ENCODE measurements at regions of chr3 and their contacts with region 1.

Region 1: GRCh38 chr3:126267226-126267975 is 87.0 kb upstream of the ALDH1L1 start:
- DNase-seq: peak; percentile 49
- H3K4me3 ChIP-seq: peak overlapping the region in 2 of 4 donors; percentile 19 to 38
- H3K27ac ChIP-seq: peak overlapping the region; percentile 71 to 86 (median 72)
- H3K4me1 ChIP-seq: peaks cover 6 to 32% (median 12%) of the 10 kb centered on the region in 4 donors
- H3K27me3 ChIP-seq: peaks cover 25% of the 10 kb centered on the region
- CTCF ChIP-seq: no peak
- EP300 ChIP-seq: peak; percentile 52
- POLR2A ChIP-seq: no peak

Region 2: DNA sequence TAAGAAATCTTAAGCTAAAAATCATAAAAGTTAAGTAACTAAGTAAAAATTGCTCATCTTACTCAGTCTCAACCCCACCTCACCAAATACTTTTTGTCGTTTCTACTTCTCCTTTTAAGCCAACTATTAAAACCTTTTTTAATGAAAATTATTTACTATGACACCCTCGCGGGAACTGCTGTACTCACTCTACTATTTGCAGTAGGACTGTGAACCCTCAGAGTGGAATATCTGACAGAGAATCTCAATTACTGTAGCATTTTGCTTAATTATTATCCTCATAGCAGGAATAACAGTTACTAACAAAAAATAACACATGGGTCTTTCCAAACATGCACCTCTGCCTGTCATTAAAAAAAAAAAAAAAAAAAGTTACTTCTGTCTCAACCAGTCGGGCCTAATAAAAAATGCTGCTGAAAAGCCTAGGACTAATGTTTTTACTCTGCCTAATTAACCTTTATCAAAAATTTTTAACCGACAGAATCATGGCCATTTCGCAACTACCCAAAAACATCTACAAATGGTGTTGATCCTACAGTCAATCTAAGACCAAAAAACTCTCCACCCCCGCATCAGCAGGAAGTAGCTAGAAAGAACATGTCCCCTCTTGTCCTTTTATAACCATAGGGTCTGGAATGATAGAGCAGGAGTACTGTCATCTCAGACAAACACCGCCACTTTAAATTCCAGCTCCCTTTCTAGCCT is 97.2 kb before region 1 on chr3:
- in situ Hi-C with region 1: no loop called
- intact Hi-C with region 1: no loop called
- DNase-seq: no peak
- H3K4me3 ChIP-seq: no peak overlapping the region
- H3K27ac ChIP-seq: no peak overlapping the region
- H3K4me1 ChIP-seq: no peaks in the 10 kb centered on the region
- H3K27me3 ChIP-seq: peaks cover 18% of the 10 kb centered on the region
- CTCF ChIP-seq: no peak
- EP300 ChIP-seq: no peak
- POLR2A ChIP-seq: no peak

Region 3: DNA sequence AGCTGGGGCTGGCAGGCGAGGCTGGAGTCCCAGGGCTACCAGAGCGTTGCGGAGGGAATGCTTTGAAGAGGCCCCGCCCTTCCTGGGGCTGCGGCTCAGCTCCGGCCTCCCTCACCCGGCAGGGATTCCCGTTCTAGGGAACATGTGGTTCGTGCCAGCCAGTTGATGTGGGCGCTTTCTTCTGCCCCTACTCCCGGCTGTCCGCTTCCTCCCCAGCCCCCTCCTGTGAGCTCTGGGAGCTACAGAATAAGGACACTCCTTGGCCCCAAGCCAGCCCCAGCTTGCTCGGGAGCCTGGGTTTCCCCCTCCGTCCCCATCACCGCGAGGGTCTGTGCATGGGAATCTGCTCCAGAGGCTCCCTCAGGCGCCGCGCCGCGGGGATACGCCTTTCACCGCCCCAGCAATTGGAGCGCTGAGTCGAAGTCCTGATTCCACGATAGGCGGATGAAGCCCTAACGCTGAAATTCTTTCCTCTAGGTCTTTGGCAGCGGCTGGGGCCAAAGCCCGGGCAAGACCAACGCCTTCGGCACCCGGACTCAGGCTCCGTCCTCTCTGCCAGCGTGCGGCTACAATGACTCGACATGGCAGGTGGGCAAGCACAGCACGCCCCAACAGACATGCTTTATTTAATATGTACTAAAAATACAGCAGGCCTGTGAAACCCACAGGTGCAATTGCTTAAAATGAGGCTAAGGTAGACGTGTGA is 20.3 kb after region 1 on chr3:
- in situ Hi-C with region 1: no loop called
- intact Hi-C with region 1: no loop called
- DNase-seq: peak; percentile 53
- H3K4me3 ChIP-seq: peak overlapping the region; percentile 20 to 39 (median 27)
- H3K27ac ChIP-seq: peak overlapping the region; percentile 49 to 84 (median 74)
- H3K4me1 ChIP-seq: peaks cover 6 to 20% (median 10%) of the 10 kb centered on the region in 4 donors
- H3K27me3 ChIP-seq: peaks cover 57% of the 10 kb centered on the region
- CTCF ChIP-seq: no peak
- EP300 ChIP-seq: no peak
- POLR2A ChIP-seq: no peak

Region 4: DNA sequence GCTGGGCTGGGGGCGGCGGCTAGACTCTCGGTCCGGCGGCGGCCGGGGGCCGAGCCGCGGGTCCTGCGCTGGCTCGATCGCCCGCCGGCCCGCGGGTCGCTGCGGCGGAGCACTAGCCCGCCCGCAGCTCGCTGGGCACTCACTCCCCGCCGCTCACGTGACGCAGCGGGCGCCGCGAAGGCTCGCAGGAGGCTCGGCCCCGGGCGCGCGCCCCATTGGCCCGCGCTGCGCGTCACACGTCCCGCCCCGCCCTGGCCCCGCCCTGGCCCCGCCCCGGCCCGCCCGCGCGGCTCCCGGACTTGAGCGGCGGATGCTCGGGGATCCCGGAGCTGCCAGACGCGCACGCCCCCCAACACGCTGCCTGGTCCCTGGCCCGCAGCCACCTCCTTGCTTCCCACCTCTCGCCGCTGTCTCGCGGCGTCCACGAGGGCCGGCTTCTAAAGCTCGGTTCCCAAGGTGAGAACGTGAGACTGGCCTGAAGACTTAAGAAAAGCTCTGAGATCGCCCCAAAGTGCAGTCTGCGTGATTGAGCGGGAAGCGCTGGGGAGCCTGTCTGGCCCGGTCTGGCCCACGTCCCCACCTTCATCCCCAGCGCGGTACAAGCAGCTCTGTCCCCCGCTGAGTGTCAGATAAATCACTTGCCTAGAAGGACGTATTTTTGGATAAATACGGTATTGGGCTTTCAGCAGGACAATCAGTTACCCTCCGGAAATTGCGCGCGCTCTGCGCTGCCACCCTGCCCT is 90.1 kb after region 1 on chr3 and contains the start of gene KLF15:
- in situ Hi-C with region 1: no loop called
- intact Hi-C with region 1: loop called (anchors 10 kb)
- DNase-seq: peak; percentile 89
- H3K4me3 ChIP-seq: peak within 1 kb of the TSS; percentile 61 to 89 (median 64)
- H3K27ac ChIP-seq: peak within 1 kb of the TSS; percentile 76 to 88 (median 82)
- H3K4me1 ChIP-seq: peaks cover 0 to 30% (median 18%) of the 10 kb centered on the region in 4 donors
- H3K27me3 ChIP-seq: peaks cover 59% of the 10 kb centered on the region
- CTCF ChIP-seq: no peak
- EP300 ChIP-seq: no peak
- POLR2A ChIP-seq: no peak
- total RNA-seq, gene KLF15: 4.0 to 19.5 (median 8.4) TPM

Region 5: DNA sequence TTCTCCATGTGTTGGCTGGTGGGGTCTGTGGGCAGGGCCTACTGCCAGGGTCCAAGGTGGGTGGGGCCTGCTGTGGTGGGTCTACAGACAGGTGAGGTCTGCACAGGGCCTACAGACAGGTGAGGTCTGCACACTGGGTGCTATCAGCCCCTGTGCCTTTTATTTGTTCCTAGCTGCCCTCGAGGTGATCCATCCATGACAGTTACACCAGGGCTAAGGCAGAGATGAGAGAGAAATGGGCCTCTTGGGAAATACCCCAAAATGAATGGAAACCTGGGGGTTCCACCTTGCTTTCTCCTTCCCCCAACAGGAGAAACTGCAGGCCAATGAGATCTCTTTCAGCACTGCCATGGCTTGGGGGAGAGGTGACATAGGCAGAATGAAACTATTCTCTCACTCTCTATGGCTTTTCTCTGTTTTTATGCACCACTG is 163.7 kb after region 1 on chr3:
- in situ Hi-C with region 1: no loop called
- intact Hi-C with region 1: no loop called
- DNase-seq: no peak
- H3K4me3 ChIP-seq: no peak overlapping the region
- H3K27ac ChIP-seq: no peak overlapping the region
- H3K4me1 ChIP-seq: no peaks in the 10 kb centered on the region
- H3K27me3 ChIP-seq: no peaks in the 10 kb centered on the region
- CTCF ChIP-seq: no peak
- EP300 ChIP-seq: no peak
- POLR2A ChIP-seq: no peak

Measured in transverse colon (tissue), 4 donors.